Endothelial cell of umbilical vein (primary cell): ENCODE measurements at regions of chr19 and their contacts with region 1.

Region 1: GRCh38 chr19:28466107-28467045 is 746.6 kb downstream of the UQCRFS1 start:
- DNase-seq: no peak
- H3K4me3 ChIP-seq: no peak overlapping the region
- H3K27ac ChIP-seq: no peak overlapping the region
- H3K4me1 ChIP-seq: no peaks in the 10 kb centered on the region
- H3K27me3 ChIP-seq: no peaks in the 10 kb centered on the region
- CTCF ChIP-seq: peak; percentile 28 to 65
- POLR2A ChIP-seq: no peak

Region 2: GRCh38 chr19:28710278-28710677 is 243.9 kb after region 1 on chr19:
- CTCF ChIA-PET with region 1: no interaction called
- POLR2A ChIA-PET with region 1: no interaction called
- dilution Hi-C with region 1: no loop called
- intact Hi-C with region 1: loop called (anchors 1 kb)
- DNase-seq: peak; percentile 54
- H3K4me3 ChIP-seq: no peak overlapping the region
- H3K27ac ChIP-seq: no peak overlapping the region
- H3K4me1 ChIP-seq: no peaks in the 10 kb centered on the region
- H3K27me3 ChIP-seq: no peaks in the 10 kb centered on the region
- CTCF ChIP-seq: peak; percentile 32 to 44
- POLR2A ChIP-seq: no peak

Region 3: GRCh38 chr19:28878862-28879566 is 412.6 kb after region 1 on chr19:
- CTCF ChIA-PET with region 1: interaction called, 3 read pairs
- POLR2A ChIA-PET with region 1: no interaction called
- dilution Hi-C with region 1: no loop called
- intact Hi-C with region 1: loop called (anchors 1 kb)
- DNase-seq: peak; percentile 20
- H3K4me3 ChIP-seq: no peak overlapping the region
- H3K27ac ChIP-seq: no peak overlapping the region
- H3K4me1 ChIP-seq: no peaks in the 10 kb centered on the region
- H3K27me3 ChIP-seq: no peaks in the 10 kb centered on the region
- CTCF ChIP-seq: peak; percentile 45 to 47
- POLR2A ChIP-seq: no peak

Region 4: DNA sequence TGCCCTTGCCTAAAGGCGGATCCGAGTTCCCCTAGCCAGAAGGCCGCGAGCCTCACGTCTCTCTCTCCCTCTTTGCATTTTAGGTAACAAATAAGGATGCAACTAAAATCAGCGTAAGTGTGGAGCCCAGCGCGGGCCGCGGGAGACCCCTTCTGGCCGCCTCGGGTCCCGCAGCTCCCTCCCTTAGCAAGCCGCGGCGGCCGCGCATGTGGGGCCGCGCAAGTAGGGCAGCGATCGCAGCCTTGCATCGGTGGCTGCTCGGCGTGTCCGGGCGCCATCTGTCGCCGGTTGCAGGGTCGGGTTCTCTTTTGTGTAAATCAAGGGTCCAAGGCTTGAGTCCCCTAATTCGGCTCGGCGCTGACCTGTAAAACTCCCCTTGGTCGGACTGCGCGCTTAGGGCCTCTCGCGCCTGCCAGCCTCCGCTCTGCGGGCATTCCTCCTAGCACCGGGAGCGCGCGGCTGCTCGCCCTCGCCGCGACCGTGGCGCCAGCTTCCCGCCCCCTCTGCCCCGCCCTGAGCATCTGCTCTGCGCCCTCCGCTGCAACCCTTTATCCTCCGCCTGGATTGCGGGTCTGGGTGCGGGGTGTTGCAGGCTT is 1062.1 kb after region 1 on chr19:
- CTCF ChIA-PET with region 1: no interaction called
- POLR2A ChIA-PET with region 1: no interaction called
- dilution Hi-C with region 1: no loop called
- intact Hi-C with region 1: loop called (anchors 2 kb)
- DNase-seq: peak; percentile 49
- H3K4me3 ChIP-seq: no peak overlapping the region
- H3K27ac ChIP-seq: no peak overlapping the region
- H3K4me1 ChIP-seq: no peaks in the 10 kb centered on the region
- H3K27me3 ChIP-seq: peaks cover 42 to 61% of the 10 kb centered on the region in 2 experiments
- CTCF ChIP-seq: peak; percentile 70 to 86
- POLR2A ChIP-seq: no peak